Endothelial cell of umbilical vein (primary cell): ENCODE measurements at regions of chr2 and their contacts with region 1.

Region 1: DNA sequence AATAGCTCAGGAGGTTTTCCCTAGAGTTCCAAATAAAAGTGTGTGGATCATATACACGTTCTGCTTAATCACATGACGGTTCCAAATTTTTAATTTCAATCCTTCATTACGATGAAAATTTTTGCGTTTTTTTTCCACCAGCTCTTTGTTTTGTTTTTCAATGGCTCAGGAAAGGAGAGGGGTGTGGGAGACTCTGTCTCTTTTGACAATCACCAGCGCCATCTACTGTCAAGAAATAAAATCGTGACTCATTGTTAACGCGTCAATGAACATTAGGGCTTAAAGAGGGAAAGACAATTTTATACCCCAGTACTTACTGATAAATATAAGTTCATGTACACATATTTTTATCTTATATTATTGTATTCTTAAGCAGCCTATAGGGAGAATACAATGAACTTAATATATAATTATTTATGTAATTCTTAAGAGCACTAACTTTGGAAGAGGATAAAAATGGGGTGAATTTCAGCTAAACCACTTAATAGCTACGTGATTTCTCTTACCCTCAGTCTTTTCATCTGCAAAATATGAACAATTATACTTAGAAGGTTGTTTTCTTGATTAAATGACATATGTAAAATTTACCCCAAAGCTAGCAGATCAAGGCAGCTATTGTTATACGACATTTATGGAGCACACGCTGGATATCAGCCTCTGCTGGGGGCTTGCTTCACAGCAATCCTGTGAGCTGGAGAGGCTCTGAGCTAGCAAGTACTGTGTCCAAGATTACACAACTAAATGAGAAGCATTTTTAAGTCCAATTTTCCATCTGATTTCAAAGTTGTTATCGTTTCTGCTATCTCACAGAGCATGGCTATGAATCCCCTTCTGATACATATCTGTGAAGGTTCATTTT is 47.4 kb upstream of the RMDN2 start:
- DNase-seq: peak; percentile 73
- H3K4me3 ChIP-seq: no peak overlapping the region
- H3K27ac ChIP-seq: no peak overlapping the region
- H3K4me1 ChIP-seq: peaks cover 3% of the 10 kb centered on the region
- H3K27me3 ChIP-seq: no peaks in the 10 kb centered on the region
- CTCF ChIP-seq: peak; percentile 31 to 39
- POLR2A ChIP-seq: no peak

Region 2: DNA sequence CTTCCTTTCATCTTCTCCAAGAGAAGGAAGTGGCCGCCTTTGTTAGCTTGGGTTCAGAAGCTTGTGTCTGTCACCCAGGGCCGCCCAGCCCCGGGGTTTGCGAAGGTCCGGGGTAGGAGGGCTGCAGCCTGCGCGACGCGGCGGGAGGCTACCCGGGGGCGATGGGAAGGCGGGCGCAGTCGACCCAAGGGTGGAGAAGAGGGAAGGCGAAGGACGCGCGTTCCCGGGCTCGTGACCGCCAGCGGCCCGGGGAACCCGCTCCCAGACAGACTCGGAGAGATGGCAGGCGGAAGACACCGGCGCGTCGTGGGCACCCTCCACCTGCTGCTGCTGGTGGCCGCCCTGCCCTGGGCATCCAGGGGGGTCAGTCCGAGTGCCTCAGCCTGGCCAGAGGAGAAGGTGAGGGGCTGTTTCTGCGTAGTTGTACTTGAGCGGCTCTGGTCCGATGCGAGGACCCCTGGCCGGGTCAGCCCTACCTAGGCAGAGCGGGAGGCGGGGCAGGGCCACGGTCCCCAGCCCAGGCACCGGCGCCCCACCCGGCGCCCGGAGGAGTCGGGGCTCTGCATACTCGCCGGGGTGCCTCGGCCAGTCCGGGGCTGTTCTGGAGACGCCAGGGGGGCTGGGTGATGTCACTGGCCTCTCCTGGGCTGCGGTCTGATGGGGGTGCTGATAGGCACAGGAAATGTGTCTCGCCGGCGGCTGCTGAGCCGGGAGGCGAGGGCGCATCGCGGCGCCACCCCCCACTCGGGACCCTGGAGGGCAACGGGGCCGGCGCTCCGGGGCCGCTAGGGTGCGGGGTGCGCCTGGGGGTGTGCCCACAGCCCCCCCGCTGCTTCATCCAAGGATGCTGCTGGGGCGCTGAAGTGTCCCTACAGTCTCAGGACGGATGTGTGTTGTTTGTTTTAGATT is 533.0 kb before region 1 on chr2 and contains the start of gene QPCT:
- CTCF ChIA-PET with region 1: interaction called, 25 read pairs
- POLR2A ChIA-PET with region 1: no interaction called
- dilution Hi-C with region 1: no loop called
- intact Hi-C with region 1: loop called (anchors 5 kb)
- DNase-seq: peak; percentile 39
- H3K4me3 ChIP-seq: peak within 1 kb of the TSS; percentile 9 to 54 (median 53)
- H3K27ac ChIP-seq: peak within 1 kb of the TSS; percentile 46
- H3K4me1 ChIP-seq: peaks cover 17% of the 10 kb centered on the region
- H3K27me3 ChIP-seq: no peaks in the 10 kb centered on the region
- CTCF ChIP-seq: no peak
- POLR2A ChIP-seq: no peak
- total RNA-seq, gene QPCT: 12.8 and 14.3 TPM in 2 replicates

Region 3: DNA sequence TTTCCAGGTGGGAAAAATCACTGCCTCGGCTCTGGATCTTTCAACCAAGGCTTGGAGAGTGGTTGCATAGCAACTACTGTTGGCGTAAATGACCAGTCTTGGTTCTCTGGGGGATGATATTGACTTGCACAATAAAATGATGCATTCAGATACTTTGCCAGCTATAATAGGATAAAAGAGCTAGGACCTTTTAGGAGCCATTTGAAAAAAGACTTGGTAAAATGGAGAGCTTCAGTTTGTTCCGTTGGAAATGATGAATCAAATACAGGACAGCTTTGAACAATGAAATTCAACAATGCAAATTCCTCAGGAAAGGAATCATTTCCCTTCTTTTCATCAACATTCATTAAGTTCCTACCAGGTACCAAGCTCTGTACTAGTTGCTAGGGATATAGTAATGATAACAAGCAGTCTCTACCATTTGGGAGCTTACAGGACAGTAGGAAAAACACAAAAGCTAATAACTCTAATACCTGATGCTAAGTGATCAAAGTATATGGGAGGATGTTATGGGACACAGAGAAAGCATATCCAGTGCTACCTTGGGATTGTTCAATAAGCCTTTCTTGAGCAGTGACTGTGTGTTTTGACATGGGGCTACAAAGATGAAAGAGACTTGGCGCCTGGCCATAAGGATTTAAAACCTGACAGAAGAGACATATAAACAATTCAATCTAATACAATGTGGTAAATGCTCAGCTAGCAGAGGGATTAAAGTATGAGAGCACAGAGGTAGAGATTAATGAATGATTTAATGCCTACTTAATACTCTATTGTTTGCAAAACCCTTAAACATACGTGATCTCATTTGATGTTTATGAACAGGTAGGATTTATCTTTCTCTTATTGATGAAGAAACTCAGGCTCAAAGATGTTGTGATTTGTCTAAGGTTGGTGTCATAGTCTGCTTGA is 422.6 kb before region 1 on chr2:
- CTCF ChIA-PET with region 1: interaction called, 10 read pairs
- POLR2A ChIA-PET with region 1: no interaction called
- dilution Hi-C with region 1: no loop called
- intact Hi-C with region 1: no loop called
- DNase-seq: peak; percentile 95
- H3K4me3 ChIP-seq: no peak overlapping the region
- H3K27ac ChIP-seq: peak overlapping the region; percentile 99
- H3K4me1 ChIP-seq: peaks cover 67% of the 10 kb centered on the region
- H3K27me3 ChIP-seq: no peaks in the 10 kb centered on the region
- CTCF ChIP-seq: no peak
- POLR2A ChIP-seq: peak; percentile 9

Region 4: GRCh38 chr2:37641582-37642171 is 236.0 kb before region 1 on chr2:
- CTCF ChIA-PET with region 1: interaction called, 25 read pairs
- POLR2A ChIA-PET with region 1: no interaction called
- dilution Hi-C with region 1: no loop called
- intact Hi-C with region 1: loop called (anchors 5 kb)
- DNase-seq: no peak
- H3K4me3 ChIP-seq: no peak overlapping the region
- H3K27ac ChIP-seq: no peak overlapping the region
- H3K4me1 ChIP-seq: peaks cover 41% of the 10 kb centered on the region
- H3K27me3 ChIP-seq: no peaks in the 10 kb centered on the region
- CTCF ChIP-seq: no peak
- POLR2A ChIP-seq: no peak

Region 5: DNA sequence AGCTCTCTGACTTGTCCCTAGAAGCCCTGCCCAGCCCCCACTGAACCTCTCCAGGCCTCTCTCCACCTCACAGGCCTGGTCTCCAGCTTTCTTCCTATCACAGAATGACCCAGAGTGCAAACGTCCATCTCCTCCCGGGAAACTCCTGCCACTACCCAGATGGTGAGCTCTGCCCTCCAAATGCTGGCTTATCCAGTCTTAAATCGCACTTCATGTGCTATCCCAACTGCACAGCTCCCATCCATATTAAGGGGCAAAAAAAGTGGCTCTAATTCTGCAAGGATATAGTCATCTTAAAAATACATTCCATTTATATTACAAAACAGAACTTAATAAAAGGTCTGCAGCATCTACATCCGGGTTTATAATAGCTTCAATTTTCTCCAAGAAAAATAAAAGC is 135.4 kb before region 1 on chr2:
- CTCF ChIA-PET with region 1: interaction called, 13 read pairs
- POLR2A ChIA-PET with region 1: no interaction called
- dilution Hi-C with region 1: no loop called
- intact Hi-C with region 1: no loop called
- DNase-seq: peak; percentile 8
- H3K4me3 ChIP-seq: no peak overlapping the region
- H3K27ac ChIP-seq: no peak overlapping the region
- H3K4me1 ChIP-seq: peaks cover 4% of the 10 kb centered on the region
- H3K27me3 ChIP-seq: no peaks in the 10 kb centered on the region
- CTCF ChIP-seq: no peak
- POLR2A ChIP-seq: no peak

Region 6: DNA sequence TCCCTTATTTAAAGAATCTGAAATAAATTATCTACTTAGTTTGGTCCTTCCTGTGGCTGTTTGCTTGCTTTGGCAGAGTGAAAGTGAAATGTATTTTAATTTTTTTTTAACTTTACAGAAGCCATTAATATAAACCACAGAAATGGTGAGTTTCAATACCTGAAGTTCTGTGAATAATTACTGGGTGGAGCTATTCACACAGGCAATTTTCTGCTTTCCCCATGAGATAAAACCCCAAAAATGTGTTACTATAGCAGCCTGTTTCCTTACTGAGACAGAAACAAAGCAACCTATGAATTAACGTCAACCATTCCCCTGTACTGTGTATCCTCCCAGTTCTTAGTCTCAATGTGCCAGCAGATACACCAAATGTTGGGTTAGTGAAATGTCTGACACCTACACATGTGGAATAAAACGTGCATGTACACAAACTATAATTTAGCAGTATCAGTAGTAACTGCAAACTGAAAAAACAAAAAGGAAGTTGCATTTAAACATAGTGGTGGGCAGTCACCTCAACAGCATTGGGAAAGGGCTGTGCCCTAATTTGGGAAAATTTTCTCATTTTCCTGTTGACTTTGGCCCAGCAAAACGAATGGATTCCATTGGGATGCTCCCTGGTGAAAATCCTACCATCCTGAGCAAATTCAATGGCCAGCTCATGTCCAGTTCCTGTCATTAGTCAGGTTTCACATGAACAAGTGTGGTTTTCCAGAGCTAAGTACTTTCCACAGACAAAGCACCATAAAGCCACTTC is 25.7 kb before region 1 on chr2:
- CTCF ChIA-PET with region 1: interaction called, 97 read pairs
- POLR2A ChIA-PET with region 1: interaction called, 3 read pairs
- dilution Hi-C with region 1: no loop called
- intact Hi-C with region 1: loop called (anchors 1 kb)
- DNase-seq: no peak
- H3K4me3 ChIP-seq: no peak overlapping the region
- H3K27ac ChIP-seq: no peak overlapping the region
- H3K4me1 ChIP-seq: peaks cover 41% of the 10 kb centered on the region
- H3K27me3 ChIP-seq: no peaks in the 10 kb centered on the region
- CTCF ChIP-seq: no peak
- POLR2A ChIP-seq: no peak